SK-N-SH (cell line): ENCODE measurements at regions of chr17 and their contacts with region 1.

Region 1: DNA sequence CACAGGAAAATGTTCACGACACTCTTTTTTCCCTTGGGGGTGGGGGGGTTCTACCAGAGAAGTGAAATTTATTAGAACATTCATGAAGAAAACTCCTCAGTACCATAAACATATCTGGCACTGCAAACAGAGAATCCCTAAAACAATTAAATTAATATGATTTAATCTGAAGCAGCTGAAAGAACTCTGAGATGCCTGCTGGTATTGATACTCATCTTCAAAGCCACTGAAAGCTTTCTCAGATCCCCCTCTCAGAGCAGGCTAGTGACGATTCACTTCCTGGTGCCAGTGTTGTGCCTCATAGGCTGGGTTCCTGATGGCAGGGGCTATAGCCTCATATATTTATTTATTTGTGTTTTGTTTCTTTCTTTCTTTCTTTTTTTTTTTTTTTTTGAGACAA is 52.7 kb downstream of the MYH10 start:
- DNase-seq: peak; percentile 43
- H3K4me3 ChIP-seq: no peak overlapping the region
- H3K27ac ChIP-seq: no peak overlapping the region
- H3K4me1 ChIP-seq: peaks cover 5 to 12% of the 10 kb centered on the region in 2 experiments; a peak in 3 of 4 replicates
- H3K27me3 ChIP-seq: no peaks in the 10 kb centered on the region
- CTCF ChIP-seq: no peak
- EP300 ChIP-seq: peak in 1 of 2 experiments; percentile 25; a peak in 1 of 4 replicates
- RAD21 ChIP-seq: no peak

Region 2: DNA sequence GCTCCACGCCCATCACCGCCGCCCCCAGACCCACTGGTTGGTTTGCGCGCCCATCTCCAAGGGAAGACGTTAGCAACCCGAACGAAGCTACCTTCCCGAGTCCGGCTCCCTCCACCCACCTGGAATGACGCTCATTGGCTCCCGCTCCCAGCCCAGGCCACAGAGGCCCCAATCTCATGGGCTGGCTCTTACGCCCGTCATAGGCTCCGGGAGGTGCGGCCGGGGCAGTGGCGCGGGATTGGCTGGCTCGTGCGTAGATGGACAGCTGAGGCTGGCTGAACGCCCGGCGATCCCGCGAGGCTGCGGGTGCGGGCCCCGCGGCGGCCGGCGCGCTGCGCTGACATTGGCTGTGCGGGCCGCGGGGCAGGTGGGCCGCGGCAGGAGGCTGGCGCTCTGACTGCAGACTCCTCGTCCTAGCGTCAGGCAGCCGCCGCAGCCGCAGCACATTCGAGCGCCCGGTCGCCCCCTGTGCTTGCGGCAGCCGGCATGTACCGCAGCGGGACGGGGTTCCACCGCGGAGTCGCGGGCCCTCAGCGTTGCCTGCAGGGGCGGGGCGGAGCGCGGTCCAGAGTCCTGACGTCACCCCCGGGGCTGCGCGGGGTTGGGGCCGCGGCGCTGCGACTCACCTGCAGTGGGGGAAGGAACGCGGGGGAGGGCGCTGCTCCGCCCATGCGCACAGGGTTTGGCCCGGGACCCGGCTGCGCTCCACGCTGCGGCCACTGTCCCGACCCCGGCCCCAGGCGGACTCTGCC is 53.1 kb after region 1 on chr17:
- CTCF ChIA-PET with region 1: interaction called, 11 read pairs
- POLR2A ChIA-PET with region 1: no interaction called
- DNase-seq: peak; percentile 98
- H3K4me3 ChIP-seq: peak overlapping the region; percentile 93 to 94
- H3K27ac ChIP-seq: peak overlapping the region; percentile 52 to 88; a peak in 3 of 4 replicates
- H3K4me1 ChIP-seq: peaks cover 10 to 13% of the 10 kb centered on the region in 2 experiments; a peak in 3 of 4 replicates
- H3K27me3 ChIP-seq: no peaks in the 10 kb centered on the region
- CTCF ChIP-seq: peak; percentile 27
- EP300 ChIP-seq: no peak
- RAD21 ChIP-seq: peak; percentile 18; the same call in 1 of the 2 replicates